ENCODE measurements at regions of chr1 and their contacts with region 1.

Region 1: GRCh38 chr1:37859507-37860345 is at the start of gene MTF1:
- DNase-seq: peak; percentile 96
- ATAC-seq: peak; percentile 96
- H3K4me3 Mint-ChIP-seq: peak within 1 kb of the TSS; percentile 92
- H3K27ac Mint-ChIP-seq: peak within 1 kb of the TSS; percentile 92
- H3K4me1 Mint-ChIP-seq: peaks cover 9% of the 10 kb centered on the region
- H3K27me3 Mint-ChIP-seq: no peaks in the 10 kb centered on the region
- CTCF ChIP-seq: peak; percentile 90
- total RNA-seq, gene MTF1: 10.1 to 12.2 TPM (median 10.9 TPM) in 3 replicates

Region 2: GRCh38 chr1:37723390-37724078 is 136.2 kb before region 1 on chr1:
- CTCF ChIA-PET with region 1: interaction called, 13 read pairs
- POLR2A ChIA-PET with region 1: interaction called, 5 read pairs
- DNase-seq: no peak
- ATAC-seq: peak; percentile 22; the same call in 1 of the 2 replicates
- H3K4me3 Mint-ChIP-seq: no peak overlapping the region
- H3K27ac Mint-ChIP-seq: no peak overlapping the region
- H3K4me1 Mint-ChIP-seq: peaks cover 6% of the 10 kb centered on the region; the same call in 1 of the 2 replicates
- H3K27me3 Mint-ChIP-seq: peaks cover 4% of the 10 kb centered on the region; the same call in 1 of the 2 replicates
- CTCF ChIP-seq: no peak

Region 3: DNA sequence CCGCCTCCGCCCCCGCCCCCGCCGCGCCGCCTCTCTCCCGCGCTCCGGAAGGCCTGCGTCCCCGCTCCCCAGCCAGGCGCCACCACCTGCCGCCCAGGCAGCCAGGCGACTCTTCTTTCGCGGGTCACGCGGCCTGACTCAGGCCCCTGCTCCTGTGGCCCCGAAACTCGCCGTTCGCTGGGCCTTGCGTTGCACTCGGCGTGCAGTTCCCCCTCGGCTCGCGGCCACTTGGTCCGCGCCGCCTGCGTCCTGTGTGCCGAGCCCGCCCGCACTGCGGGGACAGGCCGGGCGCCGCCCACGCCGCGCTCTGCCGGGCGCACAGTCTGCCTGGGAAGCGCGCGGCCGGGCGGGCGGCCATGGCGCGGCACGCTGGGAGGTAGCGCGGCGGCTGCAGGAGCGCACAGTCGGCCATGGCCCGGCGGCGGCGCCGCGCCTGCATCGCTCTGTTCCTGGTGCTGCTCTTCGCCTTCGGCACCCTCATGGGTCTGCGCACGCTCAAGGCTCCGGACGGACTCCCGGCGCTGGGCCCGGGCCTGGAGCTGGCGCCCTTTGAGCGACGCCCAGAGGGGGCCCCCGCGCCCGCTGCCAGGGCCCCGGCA is 65.9 kb before region 1 on chr1 and contains the start of gene MANEAL:
- CTCF ChIA-PET with region 1: interaction called, 10 read pairs
- POLR2A ChIA-PET with region 1: no interaction called
- DNase-seq: peak; percentile 47
- ATAC-seq: peak; percentile 68
- H3K4me3 Mint-ChIP-seq: peak within 1 kb of the TSS; percentile 69
- H3K27ac Mint-ChIP-seq: no peak within 1 kb of the TSS
- H3K4me1 Mint-ChIP-seq: peaks cover 12% of the 10 kb centered on the region
- H3K27me3 Mint-ChIP-seq: peaks cover 58% of the 10 kb centered on the region
- CTCF ChIP-seq: no peak
- total RNA-seq, gene MANEAL: 4.2 to 6.4 TPM (median 5.9 TPM) in 3 replicates

Region 4: GRCh38 chr1:37817481-37817880 is 42.2 kb before region 1 on chr1:
- CTCF ChIA-PET with region 1: interaction called, 11 read pairs
- POLR2A ChIA-PET with region 1: no interaction called
- DNase-seq: peak; percentile 25
- ATAC-seq: peak; percentile 97
- H3K4me3 Mint-ChIP-seq: no peak overlapping the region
- H3K27ac Mint-ChIP-seq: no peak overlapping the region
- H3K4me1 Mint-ChIP-seq: no peaks in the 10 kb centered on the region
- H3K27me3 Mint-ChIP-seq: no peaks in the 10 kb centered on the region
- CTCF ChIP-seq: no peak

Region 5: GRCh38 chr1:37875834-37876233 is 16.1 kb after region 1 on chr1:
- CTCF ChIA-PET with region 1: interaction called, 20 read pairs
- POLR2A ChIA-PET with region 1: no interaction called
- DNase-seq: no peak
- ATAC-seq: peak; percentile 48; the same call in 1 of the 2 replicates
- H3K4me3 Mint-ChIP-seq: no peak overlapping the region
- H3K27ac Mint-ChIP-seq: 0 out of 2 replicates have a peak overlapping the region, but pooled peaks have one; percentile 49
- H3K4me1 Mint-ChIP-seq: no peaks in the 10 kb centered on the region
- H3K27me3 Mint-ChIP-seq: no peaks in the 10 kb centered on the region
- CTCF ChIP-seq: no peak

Region 6: DNA sequence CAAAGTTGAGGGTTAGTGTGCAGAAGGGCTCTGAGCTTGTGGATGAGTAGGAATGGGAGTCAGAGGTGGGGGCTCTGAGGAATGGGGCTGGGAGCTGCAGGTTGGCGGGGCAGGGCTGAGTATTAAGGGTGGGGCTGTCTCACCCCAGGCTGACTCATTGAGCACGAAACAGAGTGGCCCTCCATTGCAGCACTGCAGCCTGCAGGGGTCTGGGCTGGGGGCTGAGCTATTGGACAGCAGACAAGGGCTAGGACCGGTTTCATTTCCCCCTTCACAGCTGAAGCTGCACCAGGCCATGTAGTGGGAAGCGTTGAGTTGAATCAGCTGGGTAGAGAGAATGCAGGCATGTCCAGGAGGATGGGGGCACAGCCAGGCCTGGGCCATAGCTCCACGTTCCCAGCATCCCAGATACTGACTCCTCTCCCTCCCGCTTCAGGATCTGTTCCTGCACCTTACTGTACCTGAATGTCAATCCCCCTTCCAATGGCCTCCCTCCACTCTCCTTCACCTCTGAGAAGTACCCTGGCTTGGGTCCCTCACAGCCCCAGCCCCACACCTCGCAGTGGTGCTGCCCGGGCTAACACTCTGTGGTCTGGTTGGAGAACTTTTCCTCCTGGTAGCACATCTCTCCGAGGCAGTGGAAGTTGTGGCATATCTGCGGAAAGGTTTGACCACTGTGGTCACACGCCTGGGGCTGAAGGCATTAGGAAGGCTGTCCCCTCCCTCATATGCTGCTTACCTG is 91.5 kb after region 1 on chr1:
- CTCF ChIA-PET with region 1: interaction called, 13 read pairs
- POLR2A ChIA-PET with region 1: no interaction called
- DNase-seq: no peak
- ATAC-seq: no peak
- H3K4me3 Mint-ChIP-seq: no peak overlapping the region
- H3K27ac Mint-ChIP-seq: peak overlapping the region; percentile 45; the same call in 1 of the 2 replicates
- H3K4me1 Mint-ChIP-seq: peaks cover 12% of the 10 kb centered on the region
- H3K27me3 Mint-ChIP-seq: no peaks in the 10 kb centered on the region
- CTCF ChIP-seq: no peak